H1 (cell line): ENCODE measurements at regions of chr11 and their contacts with region 1.

Region 1: DNA sequence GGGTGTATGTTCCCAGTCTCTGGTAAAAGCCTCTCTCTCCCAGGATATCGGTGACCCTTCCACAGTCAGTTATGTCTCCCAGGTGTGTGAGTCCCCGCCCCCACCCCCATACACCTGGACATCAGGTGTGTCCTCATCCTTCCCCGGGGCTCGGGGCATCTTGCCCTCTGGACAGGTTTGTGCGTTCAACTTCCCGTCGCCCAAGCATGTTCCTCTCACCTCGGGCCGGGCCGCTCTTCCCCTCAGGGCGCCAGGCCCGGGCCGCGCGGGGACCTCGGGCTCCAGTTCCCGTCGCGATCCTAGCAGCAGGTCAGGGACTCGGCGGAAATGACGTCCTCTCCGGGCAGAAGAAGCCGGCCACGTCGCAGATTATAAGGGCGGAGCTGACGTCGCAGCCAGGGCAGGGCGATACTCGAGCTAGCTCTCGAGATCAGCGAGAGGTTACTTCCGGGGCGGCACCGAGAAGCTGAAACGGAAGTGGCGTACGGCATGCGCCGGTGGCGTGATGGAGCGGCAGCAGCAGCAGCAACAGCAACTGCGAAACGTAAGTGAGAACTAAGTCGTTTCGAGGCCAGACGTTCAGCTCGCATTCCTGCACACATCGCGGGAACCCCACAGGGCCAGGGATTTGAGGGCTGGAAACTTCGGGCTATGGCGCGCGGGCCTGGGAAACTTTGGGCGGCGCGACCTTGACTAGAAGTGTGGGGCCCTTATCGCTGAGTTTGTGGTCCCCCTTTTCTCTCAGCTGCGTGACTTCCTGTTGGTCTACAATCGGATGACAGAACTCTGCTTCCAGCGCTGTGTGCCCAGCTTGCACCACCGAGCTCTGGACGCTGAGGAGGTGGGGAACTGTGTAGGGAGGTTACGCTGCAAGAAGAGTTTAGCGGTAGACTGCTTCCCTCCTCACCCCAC is at the starts of genes ARFIP2 and TIMM10B:
- DNase-seq: peak; percentile 84 to 95
- H3K4me3 ChIP-seq: peak within 1 kb of the TSS; percentile 89 to 100 (median 100)
- H3K27ac ChIP-seq: peak within 1 kb of the TSS; percentile 93
- H3K4me1 ChIP-seq: peaks cover 4 to 13% (median 5%) of the 10 kb centered on the region in 4 experiments
- H3K27me3 ChIP-seq: no peaks in the 10 kb centered on the region
- CTCF ChIP-seq: no peak
- EP300 ChIP-seq: peak in 1 of 2 experiments; percentile 70; a peak in 1 of 3 replicates
- POLR2A ChIP-seq: peak; percentile 76 to 90
- RAD21 ChIP-seq: no peak
- total RNA-seq, gene ARFIP2: 48.7 and 51.1 TPM in 2 replicates
- total RNA-seq, gene TIMM10B: 38.2 and 45.6 TPM in 2 replicates

Region 2: GRCh38 chr11:6498121-6498520 is 16.9 kb after region 1 on chr11:
- CTCF ChIA-PET with region 1: interaction called, 15 read pairs
- POLR2A ChIA-PET with region 1: interaction called, 13 read pairs
- DNase-seq: no peak
- H3K4me3 ChIP-seq: no peak overlapping the region
- H3K27ac ChIP-seq: no peak overlapping the region
- H3K4me1 ChIP-seq: peaks cover 0 to 6% (median 1%) of the 10 kb centered on the region in 4 experiments; a peak in 4 of 7 replicates
- H3K27me3 ChIP-seq: no peaks in the 10 kb centered on the region
- CTCF ChIP-seq: no peak
- EP300 ChIP-seq: no peak
- POLR2A ChIP-seq: no peak
- RAD21 ChIP-seq: no peak

Region 3: DNA sequence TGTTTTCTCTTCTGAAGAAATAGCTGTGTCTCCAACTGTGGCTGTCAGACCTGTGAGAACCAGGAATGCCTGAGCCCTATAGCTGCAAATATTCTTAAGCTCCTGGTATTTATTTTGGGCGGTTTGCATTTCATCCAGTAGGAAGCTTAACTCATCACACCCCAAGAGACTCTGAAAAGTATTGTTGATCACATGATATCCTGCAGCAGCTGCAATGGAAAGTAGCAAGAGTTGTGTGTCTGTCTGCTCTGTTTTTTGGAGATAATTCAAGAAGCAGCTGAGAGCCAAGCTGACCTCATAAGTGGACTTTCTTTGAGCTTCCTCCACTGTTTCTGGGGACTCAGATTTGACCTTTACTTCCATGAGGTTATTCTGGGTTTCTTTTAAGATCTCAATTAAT is 238.3 kb after region 1 on chr11:
- CTCF ChIA-PET with region 1: no interaction called
- POLR2A ChIA-PET with region 1: no interaction called
- DNase-seq: no peak
- H3K4me3 ChIP-seq: no peak overlapping the region
- H3K27ac ChIP-seq: no peak overlapping the region
- H3K4me1 ChIP-seq: no peaks in the 10 kb centered on the region
- H3K27me3 ChIP-seq: no peaks in the 10 kb centered on the region
- CTCF ChIP-seq: no peak
- EP300 ChIP-seq: no peak
- POLR2A ChIP-seq: no peak
- RAD21 ChIP-seq: no peak